ENCODE measurements at regions of chr3 and their contacts with region 1.

Region 1: DNA sequence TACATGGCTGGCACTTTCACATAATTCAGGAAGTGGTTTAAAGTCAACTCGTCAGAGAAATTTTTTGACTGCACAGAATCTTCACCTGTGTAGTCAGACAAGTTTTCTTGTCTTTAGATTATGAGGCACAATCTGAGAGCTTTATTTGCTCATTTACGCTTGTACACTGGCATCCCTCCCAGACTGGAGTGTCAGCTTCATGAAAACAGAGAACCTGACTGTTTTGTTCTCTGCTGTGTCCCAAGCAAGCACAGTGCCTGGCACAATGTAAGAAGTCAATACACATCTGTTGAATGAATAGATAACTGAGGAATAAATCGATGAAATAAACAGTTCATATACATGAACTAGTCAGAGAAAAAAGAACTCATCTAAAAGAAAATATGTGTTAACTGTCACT is 846.1 kb upstream of the CFAP20DC start:
- DNase-seq: no peak
- H3K4me3 ChIP-seq: no peak overlapping the region
- H3K27ac ChIP-seq: no peak overlapping the region
- H3K4me1 ChIP-seq: no peaks in the 10 kb centered on the region
- H3K27me3 ChIP-seq: no peaks in the 10 kb centered on the region
- CTCF ChIP-seq: no peak
- EP300 ChIP-seq: no peak
- POLR2A ChIP-seq: no peak

Region 2: GRCh38 chr3:59879031-59879581 is 16.9 kb before region 1 on chr3:
- in situ Hi-C with region 1: no loop called
- intact Hi-C with region 1: loop called (anchors 1 kb)
- DNase-seq: no peak
- H3K4me3 ChIP-seq: no peak overlapping the region
- H3K27ac ChIP-seq: no peak overlapping the region
- H3K4me1 ChIP-seq: no peaks in the 10 kb centered on the region
- H3K27me3 ChIP-seq: no peaks in the 10 kb centered on the region
- CTCF ChIP-seq: no peak
- EP300 ChIP-seq: no peak
- POLR2A ChIP-seq: no peak

Measured in transverse colon (tissue), 4 donors.